ENCODE measurements at regions of chr11 and their contacts with region 1.

Region 1: DNA sequence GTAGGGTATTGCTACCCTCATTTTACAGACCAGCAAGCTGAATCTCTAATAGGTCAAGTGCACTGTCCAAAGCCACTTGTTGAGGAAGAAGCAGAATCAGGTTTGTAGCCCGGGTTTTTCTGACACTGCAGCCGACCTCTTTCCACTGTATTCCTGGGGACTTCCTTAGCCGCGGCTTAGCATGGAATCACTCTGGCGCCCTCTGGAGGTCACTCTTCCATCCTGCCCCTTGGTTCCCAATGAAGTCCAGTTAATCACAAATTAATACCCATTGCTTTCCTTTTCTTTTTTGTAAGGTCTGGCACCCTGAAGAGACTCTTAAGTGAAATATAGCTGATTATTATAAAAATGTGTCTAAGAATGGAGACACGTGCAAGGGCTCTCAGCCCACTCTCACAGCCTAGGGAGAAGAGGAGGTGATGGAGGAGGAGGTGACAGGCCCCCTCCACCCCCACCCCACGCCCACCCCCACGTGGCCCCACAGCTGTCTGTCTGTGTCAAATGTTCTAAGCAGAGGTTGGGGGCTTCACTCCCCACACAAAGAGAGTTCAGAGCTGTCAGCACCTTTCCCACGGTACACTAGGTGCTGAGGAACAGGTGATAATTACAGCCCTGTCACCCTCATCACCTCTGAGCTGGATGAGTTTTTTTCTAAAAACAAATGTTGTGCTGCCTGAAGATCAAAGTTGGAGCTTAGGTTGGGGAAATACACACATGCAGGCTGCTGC is 57.7 kb upstream of the DRD2 start:
- DNase-seq: peak; percentile 65
- ATAC-seq: peak; percentile 49
- H3K4me3 Mint-ChIP-seq: no peak overlapping the region
- H3K27ac Mint-ChIP-seq: no peak overlapping the region
- H3K4me1 Mint-ChIP-seq: no peaks in the 10 kb centered on the region
- H3K27me3 Mint-ChIP-seq: peaks cover 16% of the 10 kb centered on the region

Region 2: GRCh38 chr11:113305440-113306336 is 227.2 kb before region 1 on chr11:
- CTCF ChIA-PET with region 1: interaction called, 27 read pairs
- POLR2A ChIA-PET with region 1: no interaction called
- DNase-seq: peak; percentile 70
- ATAC-seq: peak; percentile 91
- H3K4me3 Mint-ChIP-seq: no peak overlapping the region
- H3K27ac Mint-ChIP-seq: no peak overlapping the region
- H3K4me1 Mint-ChIP-seq: no peaks in the 10 kb centered on the region
- H3K27me3 Mint-ChIP-seq: peaks cover 6% of the 10 kb centered on the region

Region 3: GRCh38 chr11:113603277-113604059 is 70.6 kb after region 1 on chr11:
- CTCF ChIA-PET with region 1: no interaction called
- POLR2A ChIA-PET with region 1: no interaction called
- DNase-seq: no peak
- ATAC-seq: no peak
- H3K4me3 Mint-ChIP-seq: no peak overlapping the region
- H3K27ac Mint-ChIP-seq: no peak overlapping the region
- H3K4me1 Mint-ChIP-seq: no peaks in the 10 kb centered on the region
- H3K27me3 Mint-ChIP-seq: peaks cover 35% of the 10 kb centered on the region